SK-N-SH (cell line): ENCODE measurements at regions of chr3 and their contacts with region 1.

Region 1: GRCh38 chr3:13282986-13283876 is 136.9 kb downstream of the NUP210 start:
- DNase-seq: peak; percentile 91
- H3K4me3 ChIP-seq: peak overlapping the region; percentile 36 to 47; a peak in 3 of 4 replicates
- H3K27ac ChIP-seq: no peak overlapping the region
- H3K4me1 ChIP-seq: no peaks in the 10 kb centered on the region
- H3K27me3 ChIP-seq: peaks cover 10% of the 10 kb centered on the region
- CTCF ChIP-seq: no peak; the same call in 1 of the 2 replicates
- EP300 ChIP-seq: no peak
- RAD21 ChIP-seq: peak; percentile 43

Region 2: DNA sequence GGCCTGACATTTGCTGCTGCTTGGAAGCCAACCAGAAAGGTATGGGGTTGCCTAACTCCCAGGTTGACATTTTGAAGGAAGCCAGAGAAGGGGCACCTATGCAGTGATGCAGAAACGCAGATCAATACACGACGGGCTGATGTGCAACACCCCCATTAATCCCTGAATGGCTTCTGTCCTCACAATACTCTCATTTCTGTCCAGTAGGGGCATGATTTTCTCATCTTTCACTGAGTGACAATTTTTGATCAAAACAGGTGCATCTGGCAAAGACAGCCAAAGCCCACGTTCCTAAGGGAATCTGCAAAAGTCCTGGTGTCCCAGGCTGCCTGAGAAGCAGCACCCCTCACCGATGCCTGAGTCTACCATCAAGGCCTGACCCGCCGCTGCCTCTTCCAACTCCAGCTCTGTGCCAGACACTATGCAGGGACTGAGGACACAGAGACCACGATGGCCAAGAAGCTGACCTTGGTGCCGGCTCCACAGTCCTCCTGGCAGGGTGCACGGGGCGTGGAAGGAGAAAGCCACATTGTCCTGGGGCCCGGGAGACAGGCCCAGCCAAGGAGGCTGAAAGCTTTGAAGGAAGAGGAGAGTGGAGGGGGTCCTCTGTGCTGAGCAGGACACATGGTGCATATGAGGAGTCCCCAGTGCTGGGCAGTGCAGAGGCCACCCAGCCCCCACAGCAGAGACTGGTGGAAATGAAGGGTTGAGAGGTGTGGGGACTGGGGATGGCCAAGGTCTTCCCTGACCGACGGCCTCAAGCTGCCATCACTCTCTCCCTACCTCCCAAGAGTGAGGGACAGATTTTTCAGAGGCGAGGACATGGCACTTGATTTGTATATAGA is 22.8 kb before region 1 on chr3:
- CTCF ChIA-PET with region 1: interaction called, 11 read pairs
- POLR2A ChIA-PET with region 1: no interaction called
- DNase-seq: no peak
- H3K4me3 ChIP-seq: no peak overlapping the region
- H3K27ac ChIP-seq: no peak overlapping the region
- H3K4me1 ChIP-seq: peaks cover 0 to 36% of the 10 kb centered on the region in 2 experiments; a peak in 1 of 4 replicates
- H3K27me3 ChIP-seq: no peaks in the 10 kb centered on the region
- CTCF ChIP-seq: peak; percentile 26; the same call in 1 of the 2 replicates
- EP300 ChIP-seq: no peak
- RAD21 ChIP-seq: no peak

Region 3: GRCh38 chr3:13452490-13453335 is 169.5 kb after region 1 on chr3:
- CTCF ChIA-PET with region 1: interaction called, 18 read pairs
- POLR2A ChIA-PET with region 1: no interaction called
- DNase-seq: peak; percentile 59
- H3K4me3 ChIP-seq: peak overlapping the region; percentile 12 to 66; a peak in 3 of 4 replicates
- H3K27ac ChIP-seq: peak overlapping the region; percentile 27 to 31; a peak in 2 of 4 replicates
- H3K4me1 ChIP-seq: no peaks in the 10 kb centered on the region; a peak in 1 of 4 replicates
- H3K27me3 ChIP-seq: no peaks in the 10 kb centered on the region
- CTCF ChIP-seq: peak; percentile 75
- EP300 ChIP-seq: no peak
- RAD21 ChIP-seq: peak; percentile 82

Region 4: DNA sequence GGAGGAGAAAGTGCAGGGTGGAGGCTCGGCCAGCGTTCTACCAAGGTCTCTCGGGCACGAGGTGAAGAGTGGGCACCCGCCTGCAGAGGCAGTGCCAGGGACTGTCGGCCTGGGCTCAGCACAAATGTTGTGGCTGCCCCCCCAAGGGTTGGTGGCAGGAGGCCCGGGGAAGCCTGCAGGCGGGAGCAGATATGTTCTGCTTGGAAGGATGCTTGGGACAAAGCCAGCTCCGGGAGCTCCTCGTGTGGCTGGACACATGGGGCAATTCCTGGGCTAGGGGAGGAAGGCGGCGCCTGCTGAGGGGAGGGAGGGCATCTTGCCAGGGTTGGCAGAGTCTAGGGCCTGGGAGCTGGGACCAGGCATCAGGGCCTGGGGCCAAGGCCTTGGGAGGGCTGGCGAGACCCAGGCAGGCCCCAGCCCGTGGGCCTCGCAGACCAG is 235.3 kb after region 1 on chr3:
- CTCF ChIA-PET with region 1: no interaction called
- POLR2A ChIA-PET with region 1: no interaction called
- DNase-seq: peak; percentile 68
- H3K4me3 ChIP-seq: no peak overlapping the region
- H3K27ac ChIP-seq: peak overlapping the region in 1 of 2 experiments; percentile 19; a peak in 1 of 4 replicates
- H3K4me1 ChIP-seq: peaks cover 0 to 37% of the 10 kb centered on the region in 2 experiments; a peak in 1 of 4 replicates
- H3K27me3 ChIP-seq: no peaks in the 10 kb centered on the region
- CTCF ChIP-seq: no peak
- EP300 ChIP-seq: no peak
- RAD21 ChIP-seq: no peak